H1 (cell line): ENCODE measurements at regions of chr19 and their contacts with region 1.

Region 1: GRCh38 chr19:47414469-47414868 is 4.9 kb downstream of the MEIS3 start:
- DNase-seq: peak in 1 of 2 experiments; percentile 70
- H3K4me3 ChIP-seq: no peak overlapping the region
- H3K27ac ChIP-seq: no peak overlapping the region
- H3K4me1 ChIP-seq: peaks cover 6 to 18% (median 10%) of the 10 kb centered on the region in 4 experiments
- H3K27me3 ChIP-seq: peaks cover 12 to 35% (median 32%) of the 10 kb centered on the region in 4 experiments
- CTCF ChIP-seq: peak; percentile 70 to 86 (median 79)
- EP300 ChIP-seq: no peak
- POLR2A ChIP-seq: no peak
- RAD21 ChIP-seq: peak; percentile 78 to 85

Region 2: GRCh38 chr19:47381653-47382279 is 32.7 kb before region 1 on chr19:
- CTCF ChIA-PET with region 1: interaction called, 19 read pairs
- POLR2A ChIA-PET with region 1: interaction called, 5 read pairs
- DNase-seq: no peak
- H3K4me3 ChIP-seq: no peak overlapping the region
- H3K27ac ChIP-seq: no peak overlapping the region
- H3K4me1 ChIP-seq: no peaks in the 10 kb centered on the region
- H3K27me3 ChIP-seq: no peaks in the 10 kb centered on the region; a peak in 1 of 7 replicates
- CTCF ChIP-seq: no peak
- EP300 ChIP-seq: no peak
- POLR2A ChIP-seq: no peak
- RAD21 ChIP-seq: no peak

Region 3: GRCh38 chr19:47391510-47392223 is 22.8 kb before region 1 on chr19:
- CTCF ChIA-PET with region 1: interaction called, 32 read pairs
- POLR2A ChIA-PET with region 1: interaction called, 6 read pairs
- DNase-seq: peak; percentile 89 to 97
- H3K4me3 ChIP-seq: no peak overlapping the region
- H3K27ac ChIP-seq: no peak overlapping the region
- H3K4me1 ChIP-seq: peaks cover 0 to 3% (median 0%) of the 10 kb centered on the region in 4 experiments; a peak in 4 of 7 replicates
- H3K27me3 ChIP-seq: no peaks in the 10 kb centered on the region
- CTCF ChIP-seq: peak; percentile 71 to 92 (median 76)
- EP300 ChIP-seq: peak in 1 of 2 experiments; percentile 90; a peak in 2 of 3 replicates
- POLR2A ChIP-seq: peak in 1 of 2 experiments; percentile 54; a peak in 2 of 3 replicates
- RAD21 ChIP-seq: peak; percentile 65 to 68

Region 4: GRCh38 chr19:47490847-47491246 is 76.4 kb after region 1 on chr19:
- CTCF ChIA-PET with region 1: no interaction called
- POLR2A ChIA-PET with region 1: no interaction called
- DNase-seq: no peak
- H3K4me3 ChIP-seq: no peak overlapping the region
- H3K27ac ChIP-seq: no peak overlapping the region
- H3K4me1 ChIP-seq: peaks cover 0 to 4% (median 1%) of the 10 kb centered on the region in 4 experiments; a peak in 2 of 7 replicates
- H3K27me3 ChIP-seq: no peaks in the 10 kb centered on the region
- CTCF ChIP-seq: no peak
- EP300 ChIP-seq: no peak
- POLR2A ChIP-seq: no peak
- RAD21 ChIP-seq: no peak

Region 5: DNA sequence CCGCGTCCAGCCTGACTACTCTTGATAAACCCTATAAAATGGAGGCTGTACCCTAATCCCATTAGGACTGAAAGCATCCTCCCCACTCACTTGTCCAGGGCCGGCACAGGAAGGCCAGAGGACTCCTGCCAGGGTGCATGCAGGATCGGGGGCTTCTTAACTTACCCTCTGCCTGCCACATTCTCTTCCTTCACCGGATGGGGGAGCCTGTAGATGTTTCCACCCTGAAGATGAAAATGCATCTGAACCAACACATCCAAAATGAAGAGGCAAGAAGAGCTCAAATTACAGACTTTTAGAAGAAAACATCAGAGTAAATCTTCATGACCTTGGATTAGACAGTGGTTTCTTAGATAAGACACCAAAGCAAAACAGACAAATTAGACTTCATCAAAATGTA is 126.3 kb after region 1 on chr19:
- CTCF ChIA-PET with region 1: no interaction called
- POLR2A ChIA-PET with region 1: no interaction called
- DNase-seq: no peak
- H3K4me3 ChIP-seq: no peak overlapping the region
- H3K27ac ChIP-seq: no peak overlapping the region
- H3K4me1 ChIP-seq: peaks cover 0 to 4% (median 0%) of the 10 kb centered on the region in 4 experiments; a peak in 1 of 7 replicates
- H3K27me3 ChIP-seq: no peaks in the 10 kb centered on the region
- CTCF ChIP-seq: peak; percentile 10 to 64 (median 39); a peak in 3 of 4 replicates
- EP300 ChIP-seq: no peak
- POLR2A ChIP-seq: no peak
- RAD21 ChIP-seq: peak; percentile 42 to 59; a peak in 3 of 4 replicates